HCT116 (cell line): ENCODE measurements at regions of chr18 and their contacts with region 1.

Region 1: DNA sequence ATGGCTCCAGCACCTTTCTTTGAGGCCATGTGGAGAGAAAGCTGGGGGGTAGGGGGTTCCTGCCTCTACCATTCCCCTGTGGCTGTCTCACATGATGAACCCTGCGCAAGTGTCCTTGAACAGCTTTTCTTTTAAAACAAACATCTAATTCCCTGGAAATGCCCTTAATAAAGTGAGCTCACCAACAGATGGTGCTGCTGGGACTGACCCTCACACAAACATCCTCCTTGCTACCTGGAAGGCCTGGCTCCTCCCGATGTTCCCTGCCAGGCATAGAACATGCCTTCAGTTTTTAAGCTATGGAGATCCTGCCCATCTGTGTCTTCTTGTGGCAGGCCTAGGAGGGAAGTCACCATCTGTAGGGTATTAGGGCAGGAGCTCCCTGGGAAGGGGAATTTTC is 60.7 kb upstream of the GATA6 start:
- DNase-seq: peak; percentile 7
- ATAC-seq: peak; percentile 78
- H3K4me3 ChIP-seq: no peak overlapping the region
- H3K27ac ChIP-seq: no peak overlapping the region
- H3K4me1 ChIP-seq: peaks cover 5 to 20% of the 10 kb centered on the region in 2 experiments; a peak in 3 of 4 replicates
- H3K27me3 ChIP-seq: no peaks in the 10 kb centered on the region
- CTCF ChIP-seq: peak in 2 of 3 experiments; percentile 35 to 36; a peak in 3 of 6 replicates
- POLR2A ChIP-seq: no peak
- RAD21 ChIP-seq: peak; percentile 46

Region 2: DNA sequence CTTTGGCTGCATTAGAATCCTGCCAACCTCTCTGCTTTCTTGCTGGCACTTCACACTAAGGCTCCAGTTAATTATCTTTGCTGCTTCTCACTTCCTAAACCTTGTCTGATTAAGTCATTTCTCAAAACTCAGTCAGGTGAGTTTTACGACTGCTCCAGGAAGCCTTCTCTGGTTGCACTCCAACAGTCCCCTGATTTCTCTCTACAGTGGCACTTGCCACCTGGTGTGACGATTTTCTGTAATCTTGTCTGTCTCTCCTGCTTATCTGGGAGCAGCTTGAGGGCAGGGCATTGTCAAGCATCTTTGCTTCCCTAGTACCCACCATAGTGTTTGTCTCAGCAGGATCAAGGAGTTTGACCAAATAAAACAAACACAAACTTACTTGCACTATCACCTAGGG is 50.3 kb after region 1 on chr18:
- CTCF ChIA-PET with region 1: no interaction called
- POLR2A ChIA-PET with region 1: no interaction called
- RAD21 ChIA-PET with region 1: no interaction called
- intact Hi-C with region 1: loop called (anchors 5 kb)
- DNase-seq: no peak
- ATAC-seq: no peak
- H3K4me3 ChIP-seq: no peak overlapping the region
- H3K27ac ChIP-seq: no peak overlapping the region
- H3K4me1 ChIP-seq: no peaks in the 10 kb centered on the region
- H3K27me3 ChIP-seq: 0 out of 2 replicates have a peak, but pooled peaks cover 4% of the 10 kb centered on the region
- CTCF ChIP-seq: no peak
- POLR2A ChIP-seq: no peak
- RAD21 ChIP-seq: no peak